ENCODE measurements at regions of chr1 and their contacts with region 1.

Region 1: GRCh38 chr1:161132410-161133219 is at the start of gene DEDD:
- DNase-seq: peak; percentile 82
- H3K4me3 ChIP-seq: peak within 1 kb of the TSS; percentile 95
- CTCF ChIP-seq: no peak

Region 2: DNA sequence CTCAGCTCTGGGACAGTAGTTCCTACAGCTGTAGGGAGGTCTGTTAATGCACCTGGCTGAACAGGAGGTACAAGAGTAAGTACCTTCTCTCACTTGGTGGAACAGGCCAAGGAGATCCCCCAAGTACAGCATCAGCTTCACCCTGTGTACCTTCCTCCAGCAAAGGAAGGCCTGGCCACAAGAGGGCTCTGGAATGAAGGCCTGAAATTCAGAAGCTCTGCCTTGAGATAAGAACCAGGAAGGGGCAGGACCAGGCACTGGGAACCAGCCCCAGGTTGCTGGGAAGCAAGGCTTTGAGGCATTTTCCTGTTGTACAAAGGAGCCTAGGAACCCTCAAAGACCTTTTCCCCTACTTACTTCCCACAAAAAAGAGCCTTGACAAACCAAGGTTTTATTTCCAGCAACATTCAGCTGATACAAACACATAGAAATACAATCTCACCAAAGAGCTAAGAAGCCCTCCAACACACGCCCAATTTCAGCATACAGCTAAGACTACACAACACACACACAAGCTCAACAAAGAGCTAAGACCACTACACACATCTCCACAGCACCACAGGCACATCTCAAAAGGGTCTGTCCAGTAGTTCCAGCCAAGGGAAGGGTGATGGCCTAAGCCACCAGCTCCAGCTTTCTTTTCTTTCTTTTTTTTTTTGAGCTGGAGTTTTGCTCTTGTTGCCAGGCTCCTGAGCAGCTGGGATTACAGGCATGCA is 135.1 kb before region 1 on chr1:
- CTCF ChIA-PET with region 1: interaction called, 147 read pairs
- POLR2A ChIA-PET with region 1: no interaction called
- DNase-seq: no peak
- H3K4me3 ChIP-seq: no peak overlapping the region
- CTCF ChIP-seq: peak; percentile 68